ENCODE measurements at regions of chr10 and their contacts with region 1.

Region 1: DNA sequence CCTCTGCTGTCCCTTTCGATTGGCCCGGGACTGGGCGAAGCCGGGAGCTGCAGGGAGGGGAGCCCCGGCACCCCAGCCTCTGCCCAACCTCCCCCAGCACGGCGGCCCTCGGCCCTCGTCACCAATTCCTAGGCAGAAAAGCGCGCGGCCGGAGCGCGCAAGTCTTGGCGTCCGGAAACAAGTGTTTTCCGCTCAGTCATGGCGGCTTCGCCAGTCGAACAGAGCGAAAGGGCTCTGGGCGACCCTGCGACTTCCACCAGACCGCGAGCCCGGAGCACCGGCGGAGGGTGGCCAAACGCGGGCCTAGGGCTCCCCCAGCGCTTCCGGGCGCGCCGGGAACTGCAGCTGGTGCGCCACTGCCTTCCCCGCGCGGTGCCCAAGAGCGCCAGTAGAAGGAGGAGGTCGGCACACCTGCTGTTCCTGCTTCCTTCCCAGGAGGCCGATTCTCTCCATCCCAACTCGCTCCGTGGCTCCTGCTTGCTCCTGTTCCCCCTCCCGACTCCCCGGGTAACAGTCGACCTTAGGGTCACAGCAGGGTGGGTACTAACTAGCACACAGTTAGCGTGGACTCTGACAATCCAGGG is 729.9 kb downstream of the ZWINT start:
- DNase-seq: no peak
- ATAC-seq: no peak
- H3K4me3 ChIP-seq: no peak overlapping the region
- H3K27ac ChIP-seq: no peak overlapping the region
- H3K4me1 ChIP-seq: no peaks in the 10 kb centered on the region
- H3K27me3 ChIP-seq: no peaks in the 10 kb centered on the region; the same call in 1 of the 2 replicates
- CTCF ChIP-seq: peak; percentile 24; the same call in 1 of the 2 replicates
- POLR2A ChIP-seq: no peak
- RAD21 ChIP-seq: peak; percentile 14; the same call in 1 of the 2 replicates

Region 2: GRCh38 chr10:55466806-55467504 is 164.2 kb before region 1 on chr10:
- CTCF ChIA-PET with region 1: no interaction called
- POLR2A ChIA-PET with region 1: interaction called, 10 read pairs
- dilution Hi-C with region 1: no loop called
- in situ Hi-C with region 1: no loop called
- intact Hi-C with region 1: no loop called
- DNase-seq: no peak
- ATAC-seq: no peak
- H3K4me3 ChIP-seq: no peak overlapping the region
- H3K27ac ChIP-seq: no peak overlapping the region
- H3K4me1 ChIP-seq: no peaks in the 10 kb centered on the region
- H3K27me3 ChIP-seq: no peaks in the 10 kb centered on the region
- CTCF ChIP-seq: no peak
- POLR2A ChIP-seq: no peak
- RAD21 ChIP-seq: no peak

Region 3: DNA sequence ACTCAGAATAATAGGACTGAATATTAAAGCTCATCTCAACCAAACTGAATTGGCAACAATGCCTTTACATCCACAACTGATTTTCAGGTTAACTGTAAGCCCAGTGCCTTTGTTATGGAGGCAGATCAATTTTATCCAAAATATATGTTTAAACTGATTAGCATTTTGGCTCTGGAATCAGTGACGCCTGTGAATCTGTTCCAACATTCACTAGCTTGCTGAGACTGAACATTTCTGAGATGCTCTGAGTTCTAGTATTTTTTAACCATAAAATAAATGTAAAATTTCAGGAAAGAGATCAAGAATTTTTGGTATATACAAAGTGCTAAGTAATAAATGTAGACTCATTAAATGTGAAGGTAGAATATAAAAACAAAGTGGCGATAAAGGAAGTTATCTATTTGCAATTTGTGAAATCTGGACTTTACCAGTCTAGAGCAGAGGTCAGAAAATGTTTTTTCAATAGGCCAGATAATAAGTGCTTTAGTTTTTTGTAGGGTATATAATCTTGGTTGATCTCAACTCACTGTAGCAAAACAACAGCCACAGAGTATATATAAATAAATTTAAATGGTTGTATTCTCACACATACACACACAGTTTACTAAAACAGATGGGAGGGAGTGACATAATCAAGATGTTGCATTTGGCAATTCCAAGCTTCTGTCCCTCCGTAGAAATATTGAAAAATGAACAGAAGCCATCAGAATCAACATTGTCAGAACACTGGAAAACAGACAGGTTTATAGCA is 169.6 kb after region 1 on chr10:
- CTCF ChIA-PET with region 1: no interaction called
- POLR2A ChIA-PET with region 1: no interaction called
- dilution Hi-C with region 1: no loop called
- in situ Hi-C with region 1: no loop called
- intact Hi-C with region 1: no loop called
- DNase-seq: no peak
- ATAC-seq: no peak
- H3K4me3 ChIP-seq: no peak overlapping the region
- H3K27ac ChIP-seq: no peak overlapping the region
- H3K4me1 ChIP-seq: no peaks in the 10 kb centered on the region
- H3K27me3 ChIP-seq: no peaks in the 10 kb centered on the region
- CTCF ChIP-seq: no peak
- POLR2A ChIP-seq: no peak
- RAD21 ChIP-seq: no peak